Gastrocnemius medialis (tissue), 4 donors: ENCODE measurements at regions of chr11 and their contacts with region 1.

Region 1: DNA sequence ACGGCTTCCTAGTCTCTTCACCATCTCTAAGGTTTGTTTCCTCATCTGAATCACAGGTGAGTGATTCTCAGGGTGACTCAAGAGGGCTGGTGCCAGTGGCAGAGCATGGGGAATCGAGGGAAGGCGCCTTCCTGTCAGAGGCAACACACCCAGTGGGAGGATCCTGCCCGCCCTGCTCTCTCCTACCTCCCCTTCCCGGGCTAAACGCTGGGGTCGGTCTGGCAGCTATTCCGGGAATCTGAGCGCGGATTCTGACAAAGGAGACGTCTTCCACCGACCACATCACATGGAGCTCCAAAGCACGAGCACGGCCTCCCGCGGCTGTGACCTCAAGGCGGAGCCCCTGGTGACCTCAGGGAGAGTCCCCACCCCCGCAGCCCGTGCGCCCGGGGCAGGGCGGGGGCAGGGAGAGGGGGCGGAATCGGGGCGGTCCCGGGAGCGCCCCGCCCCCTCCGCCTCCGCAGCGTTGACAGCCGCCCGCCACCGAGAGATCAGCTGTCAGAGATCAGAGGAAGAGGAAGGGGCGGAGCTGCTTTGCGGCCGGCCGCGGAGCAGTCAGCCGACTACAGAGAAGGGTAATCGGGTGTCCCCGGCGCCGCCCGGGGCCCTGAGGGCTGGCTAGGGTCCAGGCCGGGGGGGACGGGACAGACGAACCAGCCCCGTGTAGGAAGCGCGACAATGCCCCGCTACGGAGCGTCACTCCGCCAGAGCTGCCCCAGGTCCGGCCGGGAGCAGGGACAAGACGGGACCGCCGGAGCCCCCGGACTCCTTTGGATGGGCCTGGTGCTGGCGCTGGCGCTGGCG is at the start of gene SMPD1:
- DNase-seq: peak; percentile 90 to 95
- ATAC-seq: peak; percentile 89 to 93
- H3K4me3 ChIP-seq: peak within 1 kb of the TSS; percentile 77 to 92 (median 86)
- H3K27ac ChIP-seq: peak within 1 kb of the TSS; percentile 90 to 97 (median 92)
- H3K4me1 ChIP-seq: peaks cover 16 to 17% of the 10 kb centered on the region in 2 donors
- H3K27me3 ChIP-seq: no peaks in the 10 kb centered on the region
- CTCF ChIP-seq: peak in 1 of 5 experiments; percentile 7
- POLR2A ChIP-seq: peak; percentile 89 to 92
- total RNA-seq, gene SMPD1: 19.2 to 56.1 (median 42.4) TPM

Region 2: GRCh38 chr11:6362873-6363678 is 27.0 kb before region 1 on chr11:
- in situ Hi-C with region 1: no loop called
- intact Hi-C with region 1: loop called (anchors 1 kb)
- DNase-seq: peak; percentile 77 to 89
- ATAC-seq: peak; percentile 84 to 85
- H3K4me3 ChIP-seq: peak overlapping the region in 2 of 4 donors; percentile 1 to 32
- H3K27ac ChIP-seq: peak overlapping the region; percentile 83 to 89 (median 86)
- H3K4me1 ChIP-seq: peaks cover 7% of the 10 kb centered on the region in 2 donors
- H3K27me3 ChIP-seq: no peaks in the 10 kb centered on the region
- CTCF ChIP-seq: peak; percentile 86 to 92 (median 89)
- POLR2A ChIP-seq: no peak

Region 3: DNA sequence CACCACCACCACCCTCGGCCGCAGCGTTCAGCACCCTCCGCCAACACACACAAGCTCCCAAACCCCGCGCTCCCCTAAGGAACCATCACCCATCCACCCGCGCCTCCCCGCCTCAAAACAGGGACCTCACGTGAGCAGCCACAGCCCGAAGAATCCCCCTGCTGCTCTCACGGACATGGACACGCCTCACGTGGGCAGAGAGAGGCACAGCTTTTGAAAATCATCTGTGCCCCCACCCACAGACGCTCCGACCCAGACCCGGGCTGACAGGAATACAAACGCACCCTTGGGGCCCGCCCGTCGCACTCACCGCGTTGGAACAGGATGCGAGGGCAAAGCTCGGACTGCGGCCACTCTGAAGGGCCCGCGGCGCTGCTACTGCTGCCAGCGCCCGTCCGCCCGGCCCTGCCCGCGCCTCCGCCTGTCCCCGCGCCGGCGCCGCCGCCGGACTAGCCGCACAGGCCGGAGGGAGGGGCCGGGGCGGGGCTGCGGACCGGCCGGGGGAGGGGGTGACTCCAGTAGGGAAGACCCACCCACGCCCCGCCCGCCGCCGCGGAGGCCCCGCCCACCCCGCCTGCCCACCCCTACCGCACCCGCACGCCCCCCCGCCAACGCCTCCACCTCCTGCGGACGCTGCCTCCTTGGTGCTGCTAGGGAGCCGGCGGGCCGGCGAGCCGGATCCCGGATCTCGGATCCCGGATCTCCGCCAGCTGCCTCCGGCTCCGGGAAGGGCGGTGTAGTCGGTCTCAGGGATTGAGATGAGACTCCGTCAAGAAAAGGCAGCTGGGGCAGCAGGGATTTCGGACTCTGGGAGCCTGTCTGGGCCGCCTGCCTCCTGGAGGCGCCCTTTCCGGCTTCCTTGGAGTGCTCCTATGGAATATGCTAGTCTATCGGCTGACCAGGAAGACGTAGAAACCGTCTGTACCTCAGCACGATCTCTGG is 83.6 kb after region 1 on chr11 and contains the start of gene TRIM3:
- in situ Hi-C with region 1: no loop called
- intact Hi-C with region 1: loop called (anchors 2 kb)
- DNase-seq: peak; percentile 92 to 93
- ATAC-seq: peak; percentile 81 to 84
- H3K4me3 ChIP-seq: peak within 1 kb of the TSS; percentile 75 to 94 (median 80)
- H3K27ac ChIP-seq: peak within 1 kb of the TSS; percentile 87 to 99 (median 92)
- H3K4me1 ChIP-seq: peaks cover 14 to 15% of the 10 kb centered on the region in 2 donors
- H3K27me3 ChIP-seq: no peaks in the 10 kb centered on the region
- CTCF ChIP-seq: peak in 2 of 5 experiments; percentile 17 to 21
- POLR2A ChIP-seq: peak; percentile 87 to 93
- total RNA-seq, gene TRIM3: 15.3 to 20.0 (median 16.5) TPM

Region 4: GRCh38 chr11:6505577-6506240 is 115.6 kb after region 1 on chr11:
- in situ Hi-C with region 1: loop called in 1 of 4 experiments (anchors 10 kb)
- intact Hi-C with region 1: no loop called
- DNase-seq: no peak
- ATAC-seq: peak in 1 of 2 donors; percentile 36
- H3K4me3 ChIP-seq: no peak overlapping the region
- H3K27ac ChIP-seq: no peak overlapping the region
- H3K4me1 ChIP-seq: no peaks in the 10 kb centered on the region
- H3K27me3 ChIP-seq: no peaks in the 10 kb centered on the region
- CTCF ChIP-seq: peak; percentile 43 to 72 (median 53)
- POLR2A ChIP-seq: no peak

Region 5: GRCh38 chr11:6619004-6619745 is 229.1 kb after region 1 on chr11 and contains the start of gene TPP1:
- in situ Hi-C with region 1: no loop called
- intact Hi-C with region 1: loop called (anchors 5 kb)
- DNase-seq: peak; percentile 90 to 93
- ATAC-seq: peak; percentile 100
- H3K4me3 ChIP-seq: peak within 1 kb of the TSS; percentile 65 to 84 (median 74)
- H3K27ac ChIP-seq: peak within 1 kb of the TSS; percentile 80 to 94 (median 90)
- H3K4me1 ChIP-seq: peaks cover 15 to 16% of the 10 kb centered on the region in 2 donors
- H3K27me3 ChIP-seq: no peaks in the 10 kb centered on the region
- CTCF ChIP-seq: no peak
- POLR2A ChIP-seq: peak; percentile 68 to 85
- total RNA-seq, gene TPP1: 13.9 to 43.4 (median 19.6) TPM

Region 6: GRCh38 chr11:6992457-6993417 is 602.6 kb after region 1 on chr11:
- in situ Hi-C with region 1: no loop called
- intact Hi-C with region 1: loop called (anchors 10 kb)
- DNase-seq: peak in 1 of 2 donors; percentile 10
- ATAC-seq: peak; percentile 85 to 97
- H3K4me3 ChIP-seq: no peak overlapping the region
- H3K27ac ChIP-seq: peak overlapping the region; percentile 23 to 73 (median 70)
- H3K4me1 ChIP-seq: peaks cover 6 to 13% of the 10 kb centered on the region in 2 donors
- H3K27me3 ChIP-seq: no peaks in the 10 kb centered on the region
- CTCF ChIP-seq: no peak
- POLR2A ChIP-seq: no peak